Activated CD4-positive, alpha-beta T cell treated with anti-CD3 and anti-CD28 coated beads for 36 hours (primary cell): ENCODE measurements at regions of chr22 and their contacts with region 1.

Region 1: DNA sequence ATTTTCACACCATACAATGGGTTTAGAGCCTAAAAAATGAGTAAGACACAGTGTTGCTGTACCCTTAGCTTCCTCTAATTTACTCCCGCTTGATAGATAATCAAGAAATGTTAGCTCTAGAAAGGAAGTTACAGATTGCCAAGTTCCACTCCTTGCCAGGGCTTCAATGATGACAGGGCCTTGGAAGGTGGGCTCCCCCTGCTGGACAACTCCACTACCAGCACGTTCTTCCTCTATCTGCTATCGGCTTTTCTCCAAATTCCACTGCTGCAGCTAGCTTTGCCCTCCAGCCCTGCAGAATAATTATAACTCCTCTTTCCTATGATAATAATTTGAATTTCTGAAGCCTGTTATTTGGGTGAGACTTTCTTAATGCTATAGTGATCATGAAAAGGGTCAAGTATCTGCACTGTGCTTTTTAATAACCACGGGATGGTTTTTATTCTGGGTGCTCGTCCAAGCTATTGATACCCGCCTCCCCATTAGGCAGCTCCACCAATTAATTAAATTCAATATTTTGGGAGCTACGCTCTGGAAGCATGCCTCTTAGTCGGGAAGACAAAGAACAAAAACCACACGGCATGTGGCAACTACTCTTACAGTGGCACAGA is 9.0 kb downstream of the SYN3 start:
- DNase-seq: peak; percentile 79
- ATAC-seq: peak; percentile 49
- H3K4me3 Mint-ChIP-seq: no peak overlapping the region
- H3K27ac Mint-ChIP-seq: no peak overlapping the region
- H3K4me1 Mint-ChIP-seq: no peaks in the 10 kb centered on the region
- H3K27me3 Mint-ChIP-seq: peaks cover 28% of the 10 kb centered on the region

Region 2: DNA sequence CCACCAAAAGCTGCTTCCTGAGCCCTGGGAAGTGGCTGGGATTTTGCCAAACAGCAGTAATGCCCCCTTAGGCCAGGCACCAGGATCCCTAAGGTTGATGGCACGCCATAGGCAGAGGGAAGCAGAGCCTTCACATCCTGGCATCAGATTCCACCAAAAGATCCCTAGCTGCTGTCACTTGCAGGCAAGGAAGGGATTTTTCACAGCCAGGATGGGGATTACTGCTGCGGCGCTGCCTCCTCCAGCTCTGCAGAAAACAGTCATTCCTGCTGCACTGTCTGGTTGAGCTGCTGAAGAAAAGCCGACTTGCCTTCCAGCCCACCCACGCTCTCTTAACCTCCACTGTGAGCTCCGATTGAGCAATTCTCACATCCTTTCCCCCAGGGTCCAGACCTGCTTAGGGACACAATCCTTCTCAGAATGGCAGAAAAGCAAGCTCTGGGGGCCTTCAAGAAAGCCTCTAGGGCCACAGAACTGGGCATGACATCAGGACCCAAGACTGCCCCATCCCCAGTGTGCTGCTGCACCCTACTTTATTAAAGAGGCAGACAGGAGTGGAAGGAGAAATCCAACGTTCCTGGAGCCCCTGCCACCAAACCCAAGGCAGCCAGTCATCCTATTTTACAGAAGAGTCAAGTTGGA is 11.0 kb before region 1 on chr22:
- CTCF ChIA-PET with region 1: interaction called, 22 read pairs
- POLR2A ChIA-PET with region 1: no interaction called
- intact Hi-C with region 1: no loop called
- DNase-seq: no peak
- ATAC-seq: no peak
- H3K4me3 Mint-ChIP-seq: no peak overlapping the region
- H3K27ac Mint-ChIP-seq: no peak overlapping the region
- H3K4me1 Mint-ChIP-seq: no peaks in the 10 kb centered on the region
- H3K27me3 Mint-ChIP-seq: peaks cover 8% of the 10 kb centered on the region

Region 3: DNA sequence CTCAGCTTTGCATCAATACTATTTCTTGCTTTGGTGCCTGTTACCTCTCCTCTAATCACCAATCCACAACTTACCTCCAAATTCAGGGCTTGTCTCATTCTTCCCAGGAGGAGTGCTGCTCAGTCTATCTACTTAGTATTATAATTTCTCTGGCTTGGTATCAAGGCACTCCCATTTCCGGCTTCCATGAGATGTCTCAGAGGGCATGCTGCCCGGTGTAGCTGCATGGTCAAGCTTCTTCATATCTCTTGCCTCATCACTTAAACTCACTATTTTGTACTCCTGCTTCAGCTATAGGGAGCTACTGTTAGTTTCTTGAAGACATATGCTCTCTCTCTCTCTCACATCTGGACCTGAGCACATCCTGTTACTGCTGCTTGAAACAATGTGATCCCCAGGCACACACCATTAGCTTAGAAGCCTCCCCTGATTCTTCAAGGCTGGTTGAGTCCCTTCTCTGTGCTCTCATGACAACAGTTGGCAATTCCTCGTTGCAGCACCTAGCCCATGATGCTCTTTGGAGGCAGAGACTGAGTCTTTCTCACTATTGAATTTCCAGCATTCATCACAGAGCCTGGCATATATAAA is 191.8 kb after region 1 on chr22:
- CTCF ChIA-PET with region 1: no interaction called
- POLR2A ChIA-PET with region 1: no interaction called
- intact Hi-C with region 1: no loop called
- DNase-seq: no peak
- ATAC-seq: no peak
- H3K4me3 Mint-ChIP-seq: no peak overlapping the region
- H3K27ac Mint-ChIP-seq: no peak overlapping the region
- H3K4me1 Mint-ChIP-seq: no peaks in the 10 kb centered on the region
- H3K27me3 Mint-ChIP-seq: peaks cover 5% of the 10 kb centered on the region